ENCODE measurements at regions of chr2 and their contacts with region 1.

Region 1: DNA sequence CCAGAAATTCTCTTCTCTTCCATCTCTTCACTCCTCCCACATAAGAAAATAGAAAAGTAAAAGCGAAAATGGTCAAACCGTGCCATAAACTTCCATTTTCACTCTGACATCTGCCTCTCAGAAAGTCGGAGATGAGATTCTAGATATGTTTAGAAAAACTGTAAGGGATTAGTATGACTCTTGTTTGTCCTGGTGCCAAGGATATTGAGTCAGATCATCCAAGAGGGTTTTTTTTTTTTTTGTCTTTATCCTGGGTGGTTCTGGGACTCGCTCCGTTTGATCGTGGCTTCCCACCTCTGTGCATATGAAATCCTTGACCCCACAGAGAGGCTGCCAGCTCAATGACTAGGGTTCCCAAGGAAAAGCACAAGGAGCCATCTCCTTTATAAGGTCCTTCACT is 17.3 kb downstream of the EN1 start:
- DNase-seq: peak; percentile 46
- ATAC-seq: no peak
- H3K4me3 ChIP-seq: no peak overlapping the region
- H3K27ac ChIP-seq: no peak overlapping the region
- H3K4me1 ChIP-seq: peaks cover 1% of the 10 kb centered on the region; the same call in 1 of the 2 replicates
- H3K27me3 ChIP-seq: peaks cover 20% of the 10 kb centered on the region
- CTCF ChIP-seq: no peak

Region 2: DNA sequence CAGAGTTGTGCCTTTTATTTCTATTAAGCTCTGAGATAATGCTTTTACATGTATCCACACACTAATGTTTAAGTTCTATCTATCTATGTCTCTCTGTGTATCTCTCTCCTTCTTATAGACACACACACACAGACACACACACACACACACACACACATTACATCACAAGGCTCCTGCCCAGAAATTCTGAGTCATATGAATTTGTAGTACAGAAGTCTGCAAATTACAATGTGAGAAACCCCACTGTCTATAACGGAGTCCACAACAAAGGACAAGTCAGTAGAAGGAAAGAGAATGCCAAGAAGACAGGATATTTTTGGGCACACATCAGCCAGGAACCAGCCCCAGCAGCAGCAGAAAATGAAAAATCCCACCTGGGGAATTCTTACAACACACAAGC is 125.1 kb before region 1 on chr2:
- CTCF ChIA-PET with region 1: no interaction called
- POLR2A ChIA-PET with region 1: no interaction called
- intact Hi-C with region 1: no loop called
- DNase-seq: peak; percentile 26
- ATAC-seq: 0 out of 2 replicates have a peak, but pooled peaks have one; percentile 19
- H3K4me3 ChIP-seq: no peak overlapping the region
- H3K27ac ChIP-seq: no peak overlapping the region
- H3K4me1 ChIP-seq: peaks cover 14% of the 10 kb centered on the region
- H3K27me3 ChIP-seq: no peaks in the 10 kb centered on the region
- CTCF ChIP-seq: no peak

Region 3: GRCh38 chr2:118774458-118775133 is 55.5 kb before region 1 on chr2:
- CTCF ChIA-PET with region 1: no interaction called
- POLR2A ChIA-PET with region 1: no interaction called
- intact Hi-C with region 1: loop called (anchors 2 kb)
- DNase-seq: peak; percentile 60
- ATAC-seq: peak; percentile 96
- H3K4me3 ChIP-seq: peak overlapping the region; percentile 66
- H3K27ac ChIP-seq: no peak overlapping the region
- H3K4me1 ChIP-seq: peaks cover 6% of the 10 kb centered on the region; the same call in 1 of the 2 replicates
- H3K27me3 ChIP-seq: no peaks in the 10 kb centered on the region
- CTCF ChIP-seq: no peak

Region 4: GRCh38 chr2:118812552-118812951 is 17.6 kb before region 1 on chr2:
- CTCF ChIA-PET with region 1: no interaction called
- POLR2A ChIA-PET with region 1: no interaction called
- intact Hi-C with region 1: no loop called
- DNase-seq: no peak
- ATAC-seq: no peak
- H3K4me3 ChIP-seq: no peak overlapping the region
- H3K27ac ChIP-seq: no peak overlapping the region
- H3K4me1 ChIP-seq: no peaks in the 10 kb centered on the region
- H3K27me3 ChIP-seq: peaks cover 46% of the 10 kb centered on the region
- CTCF ChIP-seq: no peak

Region 5: GRCh38 chr2:118940486-118941205 is 110.5 kb after region 1 on chr2:
- CTCF ChIA-PET with region 1: no interaction called
- POLR2A ChIA-PET with region 1: no interaction called
- intact Hi-C with region 1: no loop called
- DNase-seq: no peak
- ATAC-seq: no peak
- H3K4me3 ChIP-seq: no peak overlapping the region
- H3K27ac ChIP-seq: no peak overlapping the region
- H3K4me1 ChIP-seq: no peaks in the 10 kb centered on the region
- H3K27me3 ChIP-seq: peaks cover 15% of the 10 kb centered on the region
- CTCF ChIP-seq: no peak